ENCODE measurements at regions of chr3 and their contacts with region 1.

Region 1: GRCh38 chr3:52190294-52191074 is 7.5 kb upstream of the ALAS1 start:
- DNase-seq: peak; percentile 67 to 85 (median 79)
- ATAC-seq: peak; percentile 51 to 66
- H3K4me3 ChIP-seq: no peak overlapping the region
- H3K27ac ChIP-seq: no peak overlapping the region
- H3K4me1 ChIP-seq: peaks cover 4% of the 10 kb centered on the region
- H3K27me3 ChIP-seq: no peaks in the 10 kb centered on the region

Region 2: GRCh38 chr3:51830836-51831385 is 359.6 kb before region 1 on chr3:
- intact Hi-C with region 1: no loop called
- DNase-seq: no peak
- ATAC-seq: no peak
- H3K4me3 ChIP-seq: no peak overlapping the region
- H3K27ac ChIP-seq: no peak overlapping the region
- H3K4me1 ChIP-seq: no peaks in the 10 kb centered on the region
- H3K27me3 ChIP-seq: no peaks in the 10 kb centered on the region

Region 3: DNA sequence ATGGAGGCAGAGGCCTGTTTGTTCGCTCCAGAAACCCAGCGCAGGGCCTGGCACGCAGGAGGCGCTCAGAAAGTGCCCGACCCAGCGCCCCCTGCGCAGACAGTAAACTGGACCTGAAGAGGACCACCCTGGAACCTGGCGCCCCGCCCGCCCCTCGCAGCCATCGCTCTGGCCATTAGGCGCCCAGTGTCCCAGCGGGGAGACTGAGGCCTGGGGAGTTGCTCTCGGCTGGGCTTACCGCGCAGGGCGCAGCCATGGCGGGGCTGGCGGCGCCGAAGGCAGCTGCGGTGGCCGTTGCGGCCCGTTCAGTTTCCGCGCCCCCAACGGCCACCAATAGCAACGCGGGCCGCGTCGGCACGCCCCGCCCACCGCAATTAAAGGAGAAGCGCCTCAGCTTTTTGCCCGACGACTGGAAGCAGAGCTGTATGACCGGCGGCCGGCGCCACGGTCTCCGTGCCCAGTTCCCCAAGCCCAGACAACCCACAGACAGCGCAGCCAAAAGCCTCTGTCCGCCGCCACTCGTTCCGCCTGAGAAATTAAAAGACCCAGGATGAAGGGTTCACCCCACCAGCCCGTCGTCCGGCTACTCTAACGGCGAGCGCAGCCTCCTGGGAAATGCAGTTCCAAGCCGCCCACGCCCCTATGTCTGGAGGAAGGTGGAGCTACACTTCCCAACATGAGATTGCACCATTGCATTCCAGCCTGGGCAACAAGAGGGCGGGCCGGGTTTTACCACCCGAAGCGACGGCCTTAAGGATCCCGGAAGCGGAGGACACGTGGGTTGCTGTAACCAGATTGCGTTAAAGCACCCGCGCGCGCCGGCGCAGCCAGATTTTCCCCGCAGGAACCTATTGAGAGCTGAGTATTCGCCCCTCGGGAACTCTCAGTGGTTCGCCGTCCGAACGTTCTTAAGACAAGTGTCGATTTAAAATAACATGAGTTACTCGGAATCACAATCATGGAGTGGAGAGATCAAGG is 36.1 kb before region 1 on chr3 and contains the start of gene POC1A:
- intact Hi-C with region 1: loop called in 1 of 4 experiments (anchors 5 kb)
- DNase-seq: peak; percentile 97 to 99 (median 98)
- ATAC-seq: peak; percentile 98
- H3K4me3 ChIP-seq: peak within 1 kb of the TSS; percentile 60
- H3K27ac ChIP-seq: peak within 1 kb of the TSS; percentile 92
- H3K4me1 ChIP-seq: peaks cover 4% of the 10 kb centered on the region
- H3K27me3 ChIP-seq: no peaks in the 10 kb centered on the region
- total RNA-seq, gene POC1A: 1.0 to 1.4 (median 1.3) TPM